ENCODE measurements at regions of chr2 and their contacts with region 1.

Region 1: GRCh38 chr2:31333527-31334183 is 80.9 kb downstream of the XDH start:
- DNase-seq: peak; percentile 82 to 86
- H3K4me3 ChIP-seq: no peak overlapping the region
- H3K4me3 Mint-ChIP-seq: no peak overlapping the region
- H3K27ac Mint-ChIP-seq: no peak overlapping the region
- H3K4me1 ChIP-seq: no peaks in the 10 kb centered on the region
- H3K4me1 Mint-ChIP-seq: no peaks in the 10 kb centered on the region
- H3K27me3 ChIP-seq: no peaks in the 10 kb centered on the region; the same call in 1 of the 2 replicates
- H3K27me3 Mint-ChIP-seq: no peaks in the 10 kb centered on the region
- CTCF ChIP-seq: peak; percentile 91 to 98

Region 2: GRCh38 chr2:30862054-30862651 is 471.5 kb before region 1 on chr2:
- CTCF ChIA-PET with region 1: interaction called, 3 read pairs
- POLR2A ChIA-PET with region 1: no interaction called
- intact Hi-C with region 1: loop called (anchors 1 kb)
- DNase-seq: peak; percentile 71 to 76
- H3K4me3 ChIP-seq: no peak overlapping the region
- H3K4me3 Mint-ChIP-seq: no peak overlapping the region
- H3K27ac Mint-ChIP-seq: no peak overlapping the region
- H3K4me1 ChIP-seq: no peaks in the 10 kb centered on the region
- H3K4me1 Mint-ChIP-seq: no peaks in the 10 kb centered on the region
- H3K27me3 ChIP-seq: no peaks in the 10 kb centered on the region
- H3K27me3 Mint-ChIP-seq: peaks cover 9% of the 10 kb centered on the region
- CTCF ChIP-seq: peak; percentile 98 to 99

Region 3: DNA sequence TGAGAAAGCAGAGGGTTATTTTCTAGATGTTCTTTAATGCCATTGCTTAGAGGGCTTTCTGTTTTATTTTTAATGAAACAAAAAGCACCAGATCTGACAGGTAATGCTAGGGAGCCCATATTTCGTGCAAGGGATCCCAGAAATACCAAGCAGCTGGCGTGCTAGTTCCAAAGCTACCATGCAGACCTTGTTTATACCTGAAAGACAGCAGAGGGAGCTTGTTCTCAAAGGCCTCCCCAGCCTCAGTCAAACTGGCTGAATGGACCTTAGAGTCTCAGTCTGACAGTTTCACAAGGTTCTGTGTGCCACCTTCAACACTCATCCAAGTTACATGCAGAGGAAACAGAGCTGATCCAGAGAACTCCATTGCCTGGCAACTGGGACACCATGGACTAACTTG is 244.0 kb before region 1 on chr2:
- CTCF ChIA-PET with region 1: no interaction called
- POLR2A ChIA-PET with region 1: no interaction called
- intact Hi-C with region 1: loop called (anchors 1 kb)
- DNase-seq: no peak
- H3K4me3 ChIP-seq: no peak overlapping the region
- H3K4me3 Mint-ChIP-seq: no peak overlapping the region
- H3K27ac Mint-ChIP-seq: no peak overlapping the region
- H3K4me1 ChIP-seq: no peaks in the 10 kb centered on the region
- H3K4me1 Mint-ChIP-seq: no peaks in the 10 kb centered on the region
- H3K27me3 ChIP-seq: no peaks in the 10 kb centered on the region
- H3K27me3 Mint-ChIP-seq: peaks cover 15% of the 10 kb centered on the region
- CTCF ChIP-seq: no peak

Region 4: GRCh38 chr2:31151501-31151900 is 182.2 kb before region 1 on chr2:
- CTCF ChIA-PET with region 1: no interaction called
- POLR2A ChIA-PET with region 1: no interaction called
- intact Hi-C with region 1: loop called (anchors 1 kb)
- DNase-seq: peak in 1 of 2 experiments; percentile 21
- H3K4me3 ChIP-seq: no peak overlapping the region
- H3K4me3 Mint-ChIP-seq: no peak overlapping the region
- H3K27ac Mint-ChIP-seq: no peak overlapping the region
- H3K4me1 ChIP-seq: no peaks in the 10 kb centered on the region
- H3K4me1 Mint-ChIP-seq: no peaks in the 10 kb centered on the region
- H3K27me3 ChIP-seq: 0 out of 2 replicates have a peak, but pooled peaks cover 1% of the 10 kb centered on the region
- H3K27me3 Mint-ChIP-seq: peaks cover 25% of the 10 kb centered on the region
- CTCF ChIP-seq: peak in 1 of 2 experiments; percentile 41

Measured in Caco-2 (cell line).